Activated naive CD4-positive, alpha-beta T cell treated with anti-CD3 and anti-CD28 coated beads for 36 hours (primary cell): ENCODE measurements at regions of chr3 and their contacts with region 1.

Region 1: GRCh38 chr3:196251918-196252317 is 35.6 kb downstream of the SLC51A start:
- DNase-seq: no peak
- H3K4me3 Mint-ChIP-seq: no peak overlapping the region
- H3K27ac Mint-ChIP-seq: no peak overlapping the region
- H3K4me1 Mint-ChIP-seq: peaks cover 1% of the 10 kb centered on the region
- H3K27me3 Mint-ChIP-seq: no peaks in the 10 kb centered on the region

Region 2: GRCh38 chr3:194497821-194498598 is 1753.9 kb before region 1 on chr3:
- CTCF ChIA-PET with region 1: no interaction called
- intact Hi-C with region 1: no loop called
- DNase-seq: no peak
- H3K4me3 Mint-ChIP-seq: no peak overlapping the region
- H3K27ac Mint-ChIP-seq: no peak overlapping the region
- H3K4me1 Mint-ChIP-seq: peaks cover 18% of the 10 kb centered on the region
- H3K27me3 Mint-ChIP-seq: no peaks in the 10 kb centered on the region

Region 3: GRCh38 chr3:196055683-196056270 is 196.1 kb before region 1 on chr3:
- CTCF ChIA-PET with region 1: no interaction called
- intact Hi-C with region 1: no loop called
- DNase-seq: no peak
- H3K4me3 Mint-ChIP-seq: no peak overlapping the region
- H3K27ac Mint-ChIP-seq: peak overlapping the region; percentile 0
- H3K4me1 Mint-ChIP-seq: peaks cover 1% of the 10 kb centered on the region
- H3K27me3 Mint-ChIP-seq: no peaks in the 10 kb centered on the region

Region 4: GRCh38 chr3:196287440-196288148 is 35.7 kb after region 1 on chr3 and contains the start of gene PCYT1A:
- CTCF ChIA-PET with region 1: interaction called, 3 read pairs
- intact Hi-C with region 1: loop called (anchors 1 kb)
- DNase-seq: peak; percentile 84
- H3K4me3 Mint-ChIP-seq: peak within 1 kb of the TSS; percentile 100
- H3K27ac Mint-ChIP-seq: peak within 1 kb of the TSS; percentile 99
- H3K4me1 Mint-ChIP-seq: peaks cover 37% of the 10 kb centered on the region
- H3K27me3 Mint-ChIP-seq: no peaks in the 10 kb centered on the region
- total RNA-seq, gene PCYT1A: 27.4 to 28.4 TPM

Region 5: GRCh38 chr3:196432137-196432879 is 180.4 kb after region 1 on chr3 and contains the start of gene UBXN7:
- CTCF ChIA-PET with region 1: interaction called, 5 read pairs
- intact Hi-C with region 1: loop called (anchors 5 kb)
- DNase-seq: peak; percentile 97
- H3K4me3 Mint-ChIP-seq: peak within 1 kb of the TSS; percentile 69
- H3K27ac Mint-ChIP-seq: peak within 1 kb of the TSS; percentile 93
- H3K4me1 Mint-ChIP-seq: peaks cover 15% of the 10 kb centered on the region
- H3K27me3 Mint-ChIP-seq: no peaks in the 10 kb centered on the region
- total RNA-seq, gene UBXN7: 54.2 to 62.5 TPM

Region 6: GRCh38 chr3:196440041-196440537 is 188.2 kb after region 1 on chr3:
- CTCF ChIA-PET with region 1: no interaction called
- intact Hi-C with region 1: loop called (anchors 1 kb)
- DNase-seq: no peak
- H3K4me3 Mint-ChIP-seq: no peak overlapping the region
- H3K27ac Mint-ChIP-seq: no peak overlapping the region
- H3K4me1 Mint-ChIP-seq: peaks cover 3% of the 10 kb centered on the region
- H3K27me3 Mint-ChIP-seq: no peaks in the 10 kb centered on the region

Region 7: DNA sequence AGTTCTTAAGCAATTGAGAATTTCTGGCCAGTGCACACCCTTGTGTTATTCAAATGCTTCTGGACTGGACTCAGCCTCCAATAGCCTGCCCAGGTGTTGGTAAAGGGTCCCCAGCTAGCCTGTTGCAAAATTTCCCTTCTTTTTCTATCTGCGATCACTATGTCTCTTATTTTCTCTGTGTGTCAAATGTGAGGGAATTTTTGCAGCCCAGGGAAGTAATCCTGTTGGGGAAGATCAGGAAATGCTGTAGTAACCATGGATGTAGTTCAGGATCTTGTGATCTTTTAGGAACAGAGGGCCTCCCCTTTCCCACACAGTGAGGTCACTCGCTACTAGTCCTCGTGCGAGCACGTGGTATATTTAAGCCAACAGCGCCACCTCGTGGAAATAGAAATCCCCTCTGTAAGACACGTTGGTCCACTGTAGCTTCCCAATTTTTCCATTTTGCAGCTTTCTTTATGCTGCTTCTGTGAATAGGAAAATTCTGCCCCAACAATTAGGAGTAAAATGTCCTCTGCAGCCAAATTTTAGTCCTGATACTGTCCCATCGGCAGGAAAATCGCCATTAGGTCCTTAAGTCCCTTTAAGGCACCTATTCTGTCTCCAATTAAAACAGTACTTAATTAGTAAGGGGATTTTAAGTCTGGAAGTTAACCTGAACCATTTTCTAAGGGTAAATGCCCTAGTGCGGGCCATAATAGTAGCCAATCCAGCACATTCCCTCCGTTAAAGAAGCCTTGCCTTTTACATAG is 267.2 kb after region 1 on chr3:
- CTCF ChIA-PET with region 1: interaction called, 14 read pairs
- intact Hi-C with region 1: loop called (anchors 1 kb)
- DNase-seq: peak; percentile 81
- H3K4me3 Mint-ChIP-seq: no peak overlapping the region
- H3K27ac Mint-ChIP-seq: no peak overlapping the region
- H3K4me1 Mint-ChIP-seq: no peaks in the 10 kb centered on the region
- H3K27me3 Mint-ChIP-seq: no peaks in the 10 kb centered on the region

Region 8: GRCh38 chr3:196554205-196554604 is 302.3 kb after region 1 on chr3:
- CTCF ChIA-PET with region 1: no interaction called
- intact Hi-C with region 1: no loop called
- DNase-seq: no peak
- H3K4me3 Mint-ChIP-seq: no peak overlapping the region
- H3K27ac Mint-ChIP-seq: no peak overlapping the region
- H3K4me1 Mint-ChIP-seq: peaks cover 2% of the 10 kb centered on the region
- H3K27me3 Mint-ChIP-seq: no peaks in the 10 kb centered on the region